ENCODE measurements at regions of chr4 and their contacts with region 1.

Region 1: DNA sequence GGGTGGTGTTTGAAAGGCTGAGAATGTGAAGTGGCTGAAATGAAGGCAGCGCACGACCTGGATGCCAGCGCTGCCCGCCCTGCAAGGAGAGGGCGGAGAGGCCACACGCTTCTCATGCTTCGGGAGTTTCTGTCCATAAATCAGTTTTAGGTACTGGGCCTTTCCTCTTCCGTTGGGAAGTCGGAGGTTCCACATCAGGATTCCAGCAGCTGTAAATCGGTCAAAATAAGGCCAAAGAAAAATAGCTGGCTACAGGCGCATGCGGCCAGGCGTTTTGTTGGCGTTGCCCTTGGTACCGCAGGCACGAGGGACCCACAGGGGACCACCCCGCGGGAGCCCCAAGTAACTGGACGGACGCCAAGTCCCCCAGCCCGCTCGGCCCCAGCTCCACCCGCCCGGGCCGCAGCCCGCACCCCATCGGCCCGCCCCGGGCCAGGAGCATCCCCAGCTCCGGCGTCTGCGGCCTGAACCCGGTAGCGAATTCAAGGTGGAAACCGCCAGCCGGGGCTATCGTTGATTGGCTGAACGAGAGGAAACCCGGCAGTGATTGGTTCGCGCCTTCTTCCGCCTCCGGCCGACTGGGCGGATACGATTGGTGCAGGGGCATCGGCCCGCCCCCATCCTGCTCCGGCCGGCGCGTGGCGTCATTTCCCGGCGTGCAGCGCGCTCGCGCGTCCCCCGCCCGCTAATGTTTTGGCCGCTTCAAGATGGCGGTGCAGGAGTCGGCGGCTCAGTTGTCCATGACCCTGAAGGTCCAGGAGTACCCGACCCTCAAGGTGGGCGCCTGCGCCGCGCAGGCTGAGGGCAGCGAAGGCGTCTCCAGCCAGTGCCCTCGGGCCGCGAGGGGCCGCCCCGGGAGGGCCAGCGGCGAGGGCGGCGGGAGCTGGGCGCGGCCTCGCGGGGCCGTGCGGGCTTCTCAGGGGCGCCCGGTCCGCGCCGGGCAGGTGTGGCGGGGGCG is at the start of gene MAEA:
- DNase-seq: peak; percentile 98 to 99
- H3K4me3 ChIP-seq: peak within 1 kb of the TSS; percentile 78 to 94 (median 90)
- H3K27ac ChIP-seq: peak within 1 kb of the TSS; percentile 89 to 97 (median 95)
- H3K4me1 ChIP-seq: peaks cover 42 to 50% (median 47%) of the 10 kb centered on the region in 4 donors
- H3K27me3 ChIP-seq: no peaks in the 10 kb centered on the region
- CTCF ChIP-seq: no peak
- EP300 ChIP-seq: no peak
- POLR2A ChIP-seq: peak in 2 of 4 donors; percentile 18 to 31
- total RNA-seq, gene MAEA: 34.0 to 295 (median 103) TPM

Region 2: GRCh38 chr4:1069382-1069781 is 220.1 kb before region 1 on chr4:
- intact Hi-C with region 1: no loop called
- DNase-seq: no peak
- H3K4me3 ChIP-seq: no peak overlapping the region
- H3K27ac ChIP-seq: no peak overlapping the region
- H3K4me1 ChIP-seq: peaks cover 0 to 6% (median 3%) of the 10 kb centered on the region in 4 donors
- H3K27me3 ChIP-seq: peaks cover 0 to 32% (median 0%) of the 10 kb centered on the region in 3 donors
- CTCF ChIP-seq: no peak
- EP300 ChIP-seq: no peak
- POLR2A ChIP-seq: no peak

Region 3: GRCh38 chr4:1346781-1347409 is 57.4 kb after region 1 on chr4 and contains the start of gene UVSSA:
- intact Hi-C with region 1: loop called (anchors 5 kb)
- DNase-seq: peak; percentile 100
- H3K4me3 ChIP-seq: peak within 1 kb of the TSS; percentile 73 to 97 (median 91)
- H3K27ac ChIP-seq: peak within 1 kb of the TSS; percentile 98 to 100 (median 100)
- H3K4me1 ChIP-seq: peaks cover 19 to 60% (median 53%) of the 10 kb centered on the region in 4 donors
- H3K27me3 ChIP-seq: no peaks in the 10 kb centered on the region
- CTCF ChIP-seq: no peak
- EP300 ChIP-seq: no peak
- POLR2A ChIP-seq: no peak
- total RNA-seq, gene UVSSA: 15.1 to 103 (median 53.9) TPM

Region 4: DNA sequence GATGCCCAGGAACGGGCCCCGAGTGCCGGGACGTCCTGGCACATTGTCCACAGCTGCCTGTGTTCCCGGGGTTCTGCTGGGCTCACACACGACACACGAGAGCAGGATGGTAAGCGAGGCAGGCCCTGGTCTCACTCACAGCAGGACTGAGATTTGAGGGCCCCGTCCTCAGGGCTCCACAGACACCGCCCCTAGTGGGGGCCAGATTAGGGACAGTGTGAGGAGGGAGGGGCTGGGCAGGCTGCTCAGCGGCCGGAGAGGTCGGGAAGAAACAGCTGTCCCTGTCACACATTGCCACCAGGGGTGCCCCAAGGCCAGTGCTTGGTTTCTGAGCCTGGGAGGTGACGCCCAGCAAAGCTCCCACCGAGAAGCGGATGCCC is 87.7 kb after region 1 on chr4:
- intact Hi-C with region 1: no loop called
- DNase-seq: no peak
- H3K4me3 ChIP-seq: no peak overlapping the region
- H3K27ac ChIP-seq: no peak overlapping the region
- H3K4me1 ChIP-seq: no peaks in the 10 kb centered on the region
- H3K27me3 ChIP-seq: no peaks in the 10 kb centered on the region
- CTCF ChIP-seq: no peak
- EP300 ChIP-seq: no peak
- POLR2A ChIP-seq: no peak

Region 5: DNA sequence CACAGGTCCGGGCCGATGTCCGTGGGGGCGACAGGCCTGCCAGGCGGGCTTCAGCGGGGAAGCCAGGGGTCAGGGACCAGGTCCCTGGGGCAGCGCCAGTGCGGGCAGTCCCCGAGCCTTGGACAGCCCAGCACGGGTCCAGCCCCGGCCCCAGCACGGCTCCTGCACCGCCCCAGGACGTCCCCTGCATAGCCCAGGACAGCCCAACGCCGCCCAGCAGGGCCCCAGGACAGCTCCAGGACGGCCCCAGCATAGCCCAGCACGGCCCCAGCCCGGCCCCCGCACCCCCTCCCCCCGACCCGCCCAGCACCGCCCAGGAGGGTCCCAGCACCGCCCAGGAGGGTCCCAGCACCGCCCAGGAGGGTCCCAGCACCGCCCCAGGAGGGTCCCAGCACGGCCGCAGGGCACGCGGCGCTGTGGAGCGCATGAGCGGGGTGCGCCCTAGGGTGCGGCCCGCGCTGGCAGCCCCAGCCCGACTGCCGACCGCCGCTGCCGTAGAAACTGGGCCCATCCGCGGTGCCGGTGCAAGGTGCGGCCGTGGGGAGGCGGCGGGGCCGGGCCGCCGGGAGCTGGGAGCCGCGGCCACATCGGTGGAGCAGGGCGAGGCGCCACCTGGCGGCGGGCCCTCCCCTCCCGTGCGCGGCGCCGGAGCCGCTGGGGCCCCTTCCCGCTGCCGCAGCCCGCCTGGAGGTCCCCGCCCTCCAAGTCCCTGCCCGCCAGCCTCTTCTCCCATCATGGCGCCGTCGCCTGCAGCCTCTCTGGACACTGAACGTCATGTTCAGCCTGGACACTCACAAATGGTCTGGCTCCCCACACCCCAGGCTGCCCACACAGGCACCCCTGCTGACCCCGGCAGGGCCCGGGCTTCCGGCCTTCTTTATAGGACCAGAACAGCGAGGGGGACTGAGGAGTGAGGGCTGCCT is 223.5 kb after region 1 on chr4:
- intact Hi-C with region 1: no loop called
- DNase-seq: peak; percentile 62 to 85
- H3K4me3 ChIP-seq: peak overlapping the region; percentile 35 to 38 (median 36)
- H3K27ac ChIP-seq: peak overlapping the region in 2 of 5 donors; percentile 8 to 54
- H3K4me1 ChIP-seq: peaks cover 4 to 16% (median 10%) of the 10 kb centered on the region in 4 donors
- H3K27me3 ChIP-seq: peaks cover 0 to 83% (median 23%) of the 10 kb centered on the region in 3 donors
- CTCF ChIP-seq: peak in 3 of 7 experiments; percentile 44 to 74 (median 69)
- EP300 ChIP-seq: no peak
- POLR2A ChIP-seq: no peak

Measured in stomach (tissue), 19 donors.